ENCODE measurements at regions of chr1 and their contacts with region 1.

Region 1: GRCh38 chr1:70442490-70442889 is 31.4 kb downstream of the CTH start:
- DNase-seq: no peak
- H3K4me3 Mint-ChIP-seq: no peak overlapping the region
- H3K27ac Mint-ChIP-seq: no peak overlapping the region
- H3K4me1 Mint-ChIP-seq: no peaks in the 10 kb centered on the region
- H3K27me3 Mint-ChIP-seq: no peaks in the 10 kb centered on the region

Region 2: DNA sequence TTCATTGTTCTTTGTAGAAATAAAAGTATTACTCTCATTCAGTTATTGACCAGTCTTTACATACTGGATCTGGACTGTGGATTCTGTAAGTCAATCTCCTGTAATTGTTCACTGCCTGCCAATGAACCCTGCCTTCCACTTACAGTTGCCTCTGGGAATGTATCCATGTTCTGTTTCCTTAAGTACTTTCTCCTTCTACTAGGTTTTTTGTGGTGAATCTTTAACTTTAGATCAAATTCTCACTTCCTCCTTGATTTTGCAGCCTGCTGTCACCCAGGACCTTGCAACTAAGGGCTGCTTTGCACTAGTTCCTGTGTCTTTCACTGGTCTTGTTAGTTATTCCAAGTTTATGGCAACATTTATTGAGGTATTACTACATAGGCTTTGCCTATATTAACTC is 59.8 kb before region 1 on chr1:
- CTCF ChIA-PET with region 1: no interaction called
- POLR2A ChIA-PET with region 1: no interaction called
- DNase-seq: no peak
- H3K4me3 Mint-ChIP-seq: no peak overlapping the region
- H3K27ac Mint-ChIP-seq: no peak overlapping the region
- H3K4me1 Mint-ChIP-seq: no peaks in the 10 kb centered on the region
- H3K27me3 Mint-ChIP-seq: peaks cover 4% of the 10 kb centered on the region

Region 3: DNA sequence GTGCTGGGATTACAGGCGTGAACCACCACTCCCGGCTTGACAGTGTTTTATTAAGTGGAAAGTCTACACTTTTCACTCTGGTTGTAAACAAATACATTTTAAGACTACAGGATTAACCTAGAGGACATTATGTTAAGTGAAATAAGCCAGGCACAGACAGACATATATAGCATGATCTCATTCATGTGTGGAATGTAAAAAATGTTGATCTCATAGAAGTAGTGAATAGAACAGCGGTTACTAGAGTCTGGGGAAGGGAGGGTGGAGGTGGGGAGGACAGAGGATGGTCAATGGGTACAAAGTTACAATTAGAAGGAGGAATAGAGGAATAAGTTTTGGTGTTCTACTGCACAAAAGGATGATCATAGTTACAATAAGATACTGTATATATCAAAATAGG is 14.5 kb before region 1 on chr1:
- CTCF ChIA-PET with region 1: no interaction called
- POLR2A ChIA-PET with region 1: interaction called, 11 read pairs
- DNase-seq: no peak
- H3K4me3 Mint-ChIP-seq: no peak overlapping the region
- H3K27ac Mint-ChIP-seq: no peak overlapping the region
- H3K4me1 Mint-ChIP-seq: peaks cover 6% of the 10 kb centered on the region
- H3K27me3 Mint-ChIP-seq: no peaks in the 10 kb centered on the region

Region 4: DNA sequence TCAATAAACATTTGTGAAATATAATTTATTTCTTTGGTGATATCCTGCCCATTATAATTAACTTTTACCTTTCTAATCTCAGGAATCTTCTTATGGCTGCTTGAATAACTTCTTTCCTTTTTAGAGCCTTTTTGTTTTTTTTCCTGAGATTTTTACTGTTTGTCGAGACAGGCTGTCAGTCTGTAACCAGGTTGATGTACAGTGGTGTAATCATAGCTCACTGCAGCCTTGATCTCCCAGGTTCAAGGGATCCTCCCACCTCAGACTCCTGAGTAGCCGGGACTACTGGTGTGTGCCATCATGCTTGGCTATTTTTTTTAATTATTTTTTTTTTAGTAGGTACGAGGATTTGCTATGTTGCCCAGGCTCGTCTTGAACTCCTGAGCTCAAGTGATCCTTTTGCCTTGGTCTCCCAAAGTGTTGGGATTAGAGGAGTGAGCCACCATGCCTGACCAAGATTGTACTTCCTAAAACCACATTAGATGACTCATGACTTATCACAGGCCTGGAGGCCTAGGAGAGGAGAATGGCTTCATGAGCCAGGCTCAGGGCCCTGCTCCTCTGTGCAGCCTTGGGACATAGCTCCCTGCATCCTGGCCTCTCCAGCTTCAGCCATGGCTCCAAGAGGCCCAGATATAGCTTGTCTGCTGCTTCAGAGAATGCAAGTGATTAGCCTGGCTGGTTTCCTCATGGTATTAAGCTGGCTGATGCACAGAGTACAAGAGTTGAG is 17.2 kb after region 1 on chr1:
- CTCF ChIA-PET with region 1: no interaction called
- POLR2A ChIA-PET with region 1: no interaction called
- DNase-seq: no peak
- H3K4me3 Mint-ChIP-seq: no peak overlapping the region
- H3K27ac Mint-ChIP-seq: no peak overlapping the region
- H3K4me1 Mint-ChIP-seq: no peaks in the 10 kb centered on the region
- H3K27me3 Mint-ChIP-seq: peaks cover 4% of the 10 kb centered on the region

Region 5: GRCh38 chr1:70487910-70488665 is 45.6 kb after region 1 on chr1:
- CTCF ChIA-PET with region 1: no interaction called
- POLR2A ChIA-PET with region 1: no interaction called
- DNase-seq: peak; percentile 36
- H3K4me3 Mint-ChIP-seq: no peak overlapping the region
- H3K27ac Mint-ChIP-seq: no peak overlapping the region
- H3K4me1 Mint-ChIP-seq: no peaks in the 10 kb centered on the region
- H3K27me3 Mint-ChIP-seq: peaks cover 16% of the 10 kb centered on the region

Region 6: GRCh38 chr1:70583522-70583921 is 141.0 kb after region 1 on chr1:
- CTCF ChIA-PET with region 1: no interaction called
- POLR2A ChIA-PET with region 1: no interaction called
- DNase-seq: no peak
- H3K4me3 Mint-ChIP-seq: no peak overlapping the region
- H3K27ac Mint-ChIP-seq: no peak overlapping the region
- H3K4me1 Mint-ChIP-seq: no peaks in the 10 kb centered on the region
- H3K27me3 Mint-ChIP-seq: no peaks in the 10 kb centered on the region